Activated CD4-positive, alpha-beta memory T cell treated with anti-CD3 and anti-CD28 coated beads, Interleukin-2, amount 10 ng/mL, durations not matched to agents 7 days and 5 days (primary cell): ENCODE measurements at regions of chr7 and their contacts with region 1.

Region 1: GRCh38 chr7:139095194-139095659 is 14.3 kb downstream of the ZC3HAV1 start:
- DNase-seq: peak; percentile 91
- H3K4me3 Mint-ChIP-seq: peak overlapping the region; percentile 78
- H3K27ac Mint-ChIP-seq: peak overlapping the region; percentile 92
- H3K4me1 Mint-ChIP-seq: peaks cover 85% of the 10 kb centered on the region
- H3K27me3 Mint-ChIP-seq: no peaks in the 10 kb centered on the region

Region 2: DNA sequence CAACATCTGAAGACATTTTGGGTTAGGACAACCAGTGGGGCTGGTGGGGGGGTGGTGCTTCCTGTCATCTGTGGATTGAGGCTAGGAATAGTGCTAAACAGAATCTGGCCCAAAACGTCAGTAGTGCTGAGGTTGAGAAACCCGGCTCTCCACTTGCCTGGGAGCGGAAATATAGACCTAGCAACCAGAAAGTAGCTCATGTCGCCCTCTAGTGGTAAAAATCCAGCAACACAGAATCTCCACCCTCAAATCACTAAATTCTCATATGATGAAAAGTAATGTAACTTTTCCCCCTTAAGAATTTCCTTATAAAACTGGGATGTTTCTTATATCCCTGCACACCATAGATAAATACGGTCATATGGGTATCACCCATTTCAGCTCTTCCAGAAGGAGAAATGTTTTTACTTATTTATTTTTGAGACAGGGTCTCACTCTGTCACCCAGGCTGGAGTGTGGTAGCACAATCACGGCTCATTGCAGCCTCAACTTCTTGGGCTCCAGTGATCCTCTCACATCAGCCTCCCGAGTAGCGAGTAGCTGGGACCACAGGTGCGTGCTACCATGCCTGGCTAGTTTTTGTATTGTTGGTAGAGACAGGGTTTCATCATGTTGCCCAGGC is 20.1 kb before region 1 on chr7:
- CTCF ChIA-PET with region 1: interaction called, 37 read pairs
- POLR2A ChIA-PET with region 1: interaction called, 23 read pairs
- DNase-seq: peak; percentile 73
- H3K4me3 Mint-ChIP-seq: peak overlapping the region; percentile 36
- H3K27ac Mint-ChIP-seq: peak overlapping the region; percentile 58
- H3K4me1 Mint-ChIP-seq: peaks cover 74% of the 10 kb centered on the region
- H3K27me3 Mint-ChIP-seq: no peaks in the 10 kb centered on the region

Region 3: DNA sequence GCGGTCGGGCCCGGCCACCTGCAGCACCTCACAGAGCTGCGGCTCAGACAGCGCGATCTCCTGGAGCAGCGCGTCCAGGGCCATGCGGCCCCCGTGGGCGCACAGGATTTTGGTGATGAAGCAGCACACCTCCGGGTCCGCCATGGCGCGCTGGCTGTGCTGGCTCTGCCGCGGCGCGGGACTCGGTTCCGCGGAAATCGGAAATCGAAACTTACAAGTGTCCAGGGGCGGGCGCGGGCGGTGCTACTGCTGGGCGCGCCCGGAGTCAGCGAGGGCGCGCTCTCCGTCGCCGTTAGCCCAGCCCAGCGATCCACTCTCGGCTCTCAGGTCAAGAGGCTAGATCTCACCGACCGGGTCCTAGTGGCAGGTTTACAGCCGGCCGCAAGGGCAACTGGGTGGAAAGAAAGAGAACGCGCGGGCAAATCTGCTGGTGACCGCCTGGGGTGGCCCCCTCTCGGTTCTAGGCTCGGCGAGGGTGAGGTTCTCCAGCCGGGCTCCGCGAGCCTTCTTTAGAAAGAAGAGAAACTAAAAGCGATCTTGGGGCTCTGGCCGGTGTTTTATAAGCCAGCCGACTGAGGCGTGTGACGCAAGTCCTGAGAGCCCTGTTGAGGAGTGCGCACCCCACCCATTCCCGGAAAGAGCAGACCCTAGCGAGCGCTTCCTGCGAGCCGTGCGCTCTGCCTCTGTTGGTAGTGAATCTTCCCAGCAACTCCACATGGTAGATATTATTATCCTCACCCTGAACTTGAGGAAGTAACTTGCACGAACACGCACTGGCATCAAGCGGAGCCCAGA is 14.2 kb after region 1 on chr7 and contains the start of gene ZC3HAV1:
- CTCF ChIA-PET with region 1: interaction called, 34 read pairs
- POLR2A ChIA-PET with region 1: interaction called, 178 read pairs
- DNase-seq: peak; percentile 92
- H3K4me3 Mint-ChIP-seq: peak within 1 kb of the TSS; percentile 92
- H3K27ac Mint-ChIP-seq: peak within 1 kb of the TSS; percentile 95
- H3K4me1 Mint-ChIP-seq: peaks cover 32% of the 10 kb centered on the region
- H3K27me3 Mint-ChIP-seq: no peaks in the 10 kb centered on the region
- total RNA-seq, gene ZC3HAV1: 129 to 133 TPM

Region 4: DNA sequence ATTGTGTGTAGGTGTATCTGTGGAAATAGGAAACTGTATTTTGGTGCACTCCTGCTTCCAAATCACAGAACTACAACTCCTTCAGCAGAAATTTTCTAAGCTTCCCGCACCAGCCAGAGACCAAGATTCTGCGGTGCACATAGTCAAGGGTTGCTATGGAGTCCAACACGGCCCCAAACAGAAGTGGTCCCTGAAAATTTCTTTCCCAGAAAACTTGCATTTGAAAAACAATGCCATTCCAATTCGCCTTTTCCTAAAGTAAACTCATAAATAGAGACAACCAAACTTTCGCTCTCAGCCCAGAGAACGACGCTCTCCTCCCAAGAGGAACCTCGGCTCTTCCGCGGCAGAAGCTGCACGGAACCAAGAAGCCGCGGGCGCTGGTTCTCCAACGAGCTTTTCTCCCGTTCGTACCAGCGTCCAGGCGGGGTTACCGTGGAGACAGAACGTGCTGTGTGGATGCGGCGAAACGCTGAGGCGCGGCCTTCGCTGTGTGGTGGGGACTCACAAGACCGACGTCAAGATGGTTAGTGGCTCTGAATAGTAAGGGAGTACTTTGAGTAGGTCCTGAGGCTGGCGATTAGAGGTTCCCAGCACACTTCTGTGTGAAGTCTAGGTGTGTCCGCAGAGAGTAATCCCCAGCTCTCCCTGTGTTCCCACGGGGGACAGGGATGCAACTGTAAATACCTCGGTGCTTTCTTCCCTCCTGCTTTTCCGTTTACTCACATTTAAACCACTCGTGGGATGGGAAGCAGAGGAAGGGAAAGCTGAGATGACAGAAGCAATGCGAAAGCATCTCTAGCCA is 38.3 kb after region 1 on chr7:
- CTCF ChIA-PET with region 1: interaction called, 6 read pairs
- POLR2A ChIA-PET with region 1: interaction called, 26 read pairs
- DNase-seq: peak; percentile 90
- H3K4me3 Mint-ChIP-seq: peak overlapping the region; percentile 80
- H3K27ac Mint-ChIP-seq: peak overlapping the region; percentile 36
- H3K4me1 Mint-ChIP-seq: peaks cover 32% of the 10 kb centered on the region
- H3K27me3 Mint-ChIP-seq: peaks cover 4% of the 10 kb centered on the region

Region 5: DNA sequence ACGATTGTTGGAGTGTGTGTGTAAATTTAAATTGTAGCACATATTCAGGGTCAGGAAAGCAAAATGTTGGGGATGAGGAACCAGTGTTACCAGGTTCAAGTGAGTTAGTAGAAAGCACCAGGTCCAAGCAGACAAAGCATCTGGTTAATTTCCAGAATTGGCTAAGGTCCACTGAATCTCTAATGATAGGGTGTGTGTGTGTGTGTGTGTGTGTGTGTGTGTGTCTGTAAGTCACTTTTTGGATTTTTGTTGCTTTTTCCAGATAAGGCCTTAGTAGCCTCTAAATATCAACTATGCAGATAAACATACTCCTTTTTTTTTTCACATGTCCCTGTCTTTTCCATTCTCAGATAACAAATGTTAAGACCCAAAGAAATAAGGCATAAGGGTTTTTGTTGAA is 209.3 kb after region 1 on chr7:
- CTCF ChIA-PET with region 1: no interaction called
- POLR2A ChIA-PET with region 1: no interaction called
- DNase-seq: no peak
- H3K4me3 Mint-ChIP-seq: no peak overlapping the region
- H3K27ac Mint-ChIP-seq: no peak overlapping the region
- H3K4me1 Mint-ChIP-seq: no peaks in the 10 kb centered on the region
- H3K27me3 Mint-ChIP-seq: no peaks in the 10 kb centered on the region

Region 6: GRCh38 chr7:139359366-139360209 is 264.4 kb after region 1 on chr7 and contains the start of gene LUC7L2:
- CTCF ChIA-PET with region 1: interaction called, 4 read pairs
- POLR2A ChIA-PET with region 1: interaction called, 25 read pairs
- DNase-seq: peak; percentile 100
- H3K4me3 Mint-ChIP-seq: peak within 1 kb of the TSS; percentile 96
- H3K27ac Mint-ChIP-seq: peak within 1 kb of the TSS; percentile 100
- H3K4me1 Mint-ChIP-seq: peaks cover 45% of the 10 kb centered on the region
- H3K27me3 Mint-ChIP-seq: no peaks in the 10 kb centered on the region
- total RNA-seq, gene LUC7L2: 106 to 110 TPM